ENCODE measurements at regions of chr10 and their contacts with region 1.

Region 1: GRCh38 chr10:102394079-102394800 is 1.3 kb upstream of the NFKB2 start:
- DNase-seq: peak; percentile 97
- H3K27ac ChIP-seq: peak overlapping the region; percentile 85
- CTCF ChIP-seq: peak; percentile 66

Region 2: DNA sequence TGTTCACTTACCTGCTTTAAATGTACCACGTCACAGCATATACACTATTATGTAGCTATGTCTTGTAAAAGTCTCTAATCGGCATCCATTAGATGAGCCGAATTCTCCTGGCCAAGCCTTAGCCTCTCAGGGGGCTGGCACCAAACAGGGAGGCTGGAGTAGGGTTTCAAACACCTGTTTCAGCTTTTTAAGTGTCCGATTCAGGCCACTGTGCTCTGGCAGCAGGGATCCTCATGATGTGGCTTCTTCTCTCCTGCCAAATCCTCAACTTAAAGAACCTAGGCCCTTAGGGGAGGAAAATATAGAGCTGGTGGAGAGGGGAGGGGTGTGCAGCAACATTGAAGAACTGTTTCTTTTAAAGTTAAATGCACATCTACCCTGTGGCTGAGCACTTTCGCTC is 67.2 kb before region 1 on chr10:
- CTCF ChIA-PET with region 1: no interaction called
- POLR2A ChIA-PET with region 1: no interaction called
- DNase-seq: no peak
- H3K27ac ChIP-seq: no peak overlapping the region
- CTCF ChIP-seq: no peak

Region 3: GRCh38 chr10:102408728-102409603 is 14.7 kb after region 1 on chr10:
- CTCF ChIA-PET with region 1: interaction called, 27 read pairs
- POLR2A ChIA-PET with region 1: no interaction called
- DNase-seq: no peak
- H3K27ac ChIP-seq: no peak overlapping the region
- CTCF ChIP-seq: no peak

Region 4: GRCh38 chr10:102420810-102421644 is 26.8 kb after region 1 on chr10 and contains the start of gene FBXL15:
- CTCF ChIA-PET with region 1: interaction called, 108 read pairs
- POLR2A ChIA-PET with region 1: interaction called, 14 read pairs
- DNase-seq: peak; percentile 98
- H3K27ac ChIP-seq: peak within 1 kb of the TSS; percentile 96
- CTCF ChIP-seq: no peak

Region 5: GRCh38 chr10:102467971-102468438 is 73.8 kb after region 1 on chr10:
- CTCF ChIA-PET with region 1: no interaction called
- POLR2A ChIA-PET with region 1: no interaction called
- DNase-seq: no peak
- H3K27ac ChIP-seq: no peak overlapping the region
- CTCF ChIP-seq: no peak

Measured in RWPE1 (cell line).